ENCODE measurements at regions of chr15 and their contacts with region 1.

Region 1: DNA sequence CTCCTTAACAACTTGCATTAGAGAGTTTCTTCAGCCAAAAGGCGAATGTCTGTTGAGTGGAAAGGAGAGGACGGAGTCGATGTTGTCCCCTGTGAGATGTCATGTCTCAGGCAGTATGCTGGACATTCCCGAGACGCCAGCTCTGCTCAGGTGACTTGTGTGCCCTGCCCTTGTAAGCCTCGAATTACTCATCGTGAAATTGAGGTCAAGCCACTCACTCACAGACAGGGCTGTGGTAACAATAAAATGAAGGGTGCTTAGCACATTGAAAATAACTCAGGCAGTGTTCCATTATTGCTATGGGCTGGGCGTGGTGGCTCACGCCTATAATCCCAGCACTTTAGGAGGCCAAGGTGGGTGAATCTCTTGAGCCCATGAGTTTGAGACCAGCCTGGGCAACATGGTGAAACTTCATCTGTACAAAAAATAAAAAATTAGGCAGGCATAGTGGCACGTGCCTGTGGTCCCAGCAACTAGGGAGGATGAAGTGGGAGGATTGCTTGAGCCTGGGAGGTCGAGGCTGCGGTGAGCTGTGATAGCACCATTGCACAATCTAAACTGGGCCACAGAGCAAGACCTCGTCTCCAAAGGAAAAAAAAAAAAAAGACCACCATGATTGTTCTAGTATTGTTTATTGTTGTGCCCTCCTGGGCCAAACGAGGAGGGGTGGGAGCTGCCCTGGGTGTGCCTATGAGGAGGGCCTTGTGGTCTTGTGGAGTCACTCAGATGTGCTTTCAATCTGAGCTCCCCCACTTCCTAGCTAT is 214.4 kb downstream of the THSD4 start:
- DNase-seq: peak in 1 of 2 donors; percentile 38
- ATAC-seq: peak in 6 of 8 donors; percentile 41 to 91 (median 70)
- H3K4me3 ChIP-seq: no peak overlapping the region
- H3K27ac ChIP-seq: peak overlapping the region; percentile 22 to 90 (median 78)
- H3K4me1 ChIP-seq: peaks cover 12 to 70% (median 38%) of the 10 kb centered on the region in 9 donors
- H3K27me3 ChIP-seq: no peaks in the 10 kb centered on the region
- CTCF ChIP-seq: no peak

Region 2: DNA sequence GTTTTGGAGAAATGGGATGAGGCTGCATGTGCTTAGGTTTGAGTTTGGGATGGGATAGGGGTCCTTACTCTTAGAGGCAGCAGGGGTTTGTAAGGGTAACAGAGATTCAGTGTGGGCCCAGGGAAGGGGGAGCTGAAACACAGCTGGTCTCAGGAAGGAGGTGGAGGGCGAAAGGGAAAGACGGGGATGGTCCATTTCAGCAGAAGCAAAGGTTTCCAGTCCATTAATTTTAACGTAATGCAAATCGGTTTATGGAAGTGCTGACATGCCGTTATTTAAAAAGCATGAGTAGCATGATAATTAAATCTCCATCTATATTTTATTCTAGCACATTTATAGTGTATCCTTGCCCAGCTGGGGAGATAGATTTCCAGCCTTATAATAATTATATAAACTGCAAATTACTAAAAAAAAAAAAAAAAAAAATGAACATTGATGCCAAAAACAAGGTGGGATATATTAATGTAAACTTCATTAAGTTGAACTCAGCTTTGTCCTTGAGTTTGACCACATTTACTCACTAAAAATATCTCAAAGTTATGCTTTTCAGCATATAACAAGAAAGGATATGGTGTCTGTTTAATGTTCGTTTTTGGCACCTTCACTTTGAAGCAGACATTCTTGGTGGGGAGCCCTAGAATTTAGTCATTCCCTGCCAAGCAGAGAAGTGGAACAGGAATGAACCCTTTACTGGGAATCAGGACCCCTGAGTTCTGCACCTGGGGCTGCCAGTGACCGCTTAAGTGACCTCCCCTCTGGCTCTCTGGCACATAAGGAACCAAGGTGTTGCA is 20.3 kb after region 1 on chr15:
- intact Hi-C with region 1: loop called in 1 of 10 experiments (anchors 1 kb)
- DNase-seq: no peak
- ATAC-seq: no peak
- H3K4me3 ChIP-seq: no peak overlapping the region
- H3K27ac ChIP-seq: peak overlapping the region in 5 of 10 donors; percentile 0 to 50 (median 34)
- H3K4me1 ChIP-seq: peaks cover 0 to 53% (median 19%) of the 10 kb centered on the region in 9 donors
- H3K27me3 ChIP-seq: no peaks in the 10 kb centered on the region
- CTCF ChIP-seq: no peak

Region 3: GRCh38 chr15:71409541-71409940 is 79.9 kb after region 1 on chr15:
- intact Hi-C with region 1: loop called in 1 of 10 experiments (anchors 10 kb)
- DNase-seq: no peak
- ATAC-seq: no peak
- H3K4me3 ChIP-seq: no peak overlapping the region
- H3K27ac ChIP-seq: peak overlapping the region in 4 of 10 donors; percentile 11 to 74 (median 27)
- H3K4me1 ChIP-seq: peaks cover 8 to 52% (median 25%) of the 10 kb centered on the region in 9 donors
- H3K27me3 ChIP-seq: no peaks in the 10 kb centered on the region
- CTCF ChIP-seq: no peak